ENCODE measurements at regions of chr3 and their contacts with region 1.

Region 1: DNA sequence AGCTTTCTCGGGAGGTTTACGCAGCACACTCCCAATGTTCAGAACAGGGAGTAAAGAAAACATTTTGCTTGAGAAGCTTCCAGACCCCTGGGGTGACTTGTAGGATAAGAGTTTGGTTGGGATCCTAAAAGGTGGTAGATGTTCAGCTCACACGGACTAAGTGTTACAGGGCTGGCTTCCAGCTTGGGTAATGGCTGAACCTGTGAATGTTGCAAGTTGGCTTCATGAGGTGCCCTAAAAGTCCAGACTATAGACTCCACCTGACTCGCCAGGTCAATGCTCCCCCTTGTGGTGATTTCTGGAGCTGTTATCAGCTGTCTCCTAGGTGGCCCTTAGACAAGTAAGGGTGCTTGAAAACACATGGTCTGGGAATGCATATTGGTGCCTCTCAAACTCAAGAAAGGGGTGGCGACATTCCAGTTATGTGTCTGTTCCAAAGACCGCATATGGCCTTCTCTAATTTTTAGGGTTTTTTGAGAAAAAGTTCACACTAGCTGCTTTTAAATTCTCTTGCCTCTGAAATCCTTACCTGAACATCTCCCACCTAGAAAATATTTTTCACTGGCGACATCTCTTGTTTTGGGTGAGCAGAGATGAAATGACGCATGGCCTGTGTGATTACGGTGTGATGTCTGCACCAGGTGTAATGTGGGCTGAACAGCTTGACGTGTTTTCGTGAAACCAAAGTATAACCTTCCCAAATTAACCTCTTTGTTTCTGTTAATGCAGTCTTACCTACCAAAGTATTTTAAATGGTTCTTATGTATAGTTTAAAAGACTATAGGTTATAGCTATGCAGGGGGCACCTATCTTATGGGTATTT is 175.7 kb upstream of the KBTBD8 start:
- DNase-seq: peak in 5 of 10 donors; percentile 35 to 60 (median 48)
- H3K4me3 ChIP-seq: no peak overlapping the region
- H3K27ac ChIP-seq: no peak overlapping the region
- H3K27me3 ChIP-seq: no peaks in the 10 kb centered on the region
- CTCF ChIP-seq: peak; percentile 33 to 77 (median 62)

Region 2: GRCh38 chr3:66483406-66483906 is 338.9 kb before region 1 on chr3:
- intact Hi-C with region 1: loop called in 1 of 2 experiments (anchors 5 kb)
- DNase-seq: peak in 9 of 10 donors; percentile 34 to 63 (median 46)
- H3K4me3 ChIP-seq: peak overlapping the region in 47 of 59 donors; percentile 0 to 58 (median 28)
- H3K27ac ChIP-seq: peak overlapping the region; percentile 63 to 98 (median 93)
- H3K27me3 ChIP-seq: no peaks in the 10 kb centered on the region
- CTCF ChIP-seq: peak in 6 of 56 donors; percentile 0 to 14 (median 6)

Region 3: GRCh38 chr3:66910266-66911055 is 88.1 kb after region 1 on chr3:
- intact Hi-C with region 1: no loop called
- DNase-seq: no peak
- H3K4me3 ChIP-seq: no peak overlapping the region
- H3K27ac ChIP-seq: no peak overlapping the region
- H3K27me3 ChIP-seq: peaks cover 0 to 11% (median 0%) of the 10 kb centered on the region in 45 donors
- CTCF ChIP-seq: no peak

Region 4: DNA sequence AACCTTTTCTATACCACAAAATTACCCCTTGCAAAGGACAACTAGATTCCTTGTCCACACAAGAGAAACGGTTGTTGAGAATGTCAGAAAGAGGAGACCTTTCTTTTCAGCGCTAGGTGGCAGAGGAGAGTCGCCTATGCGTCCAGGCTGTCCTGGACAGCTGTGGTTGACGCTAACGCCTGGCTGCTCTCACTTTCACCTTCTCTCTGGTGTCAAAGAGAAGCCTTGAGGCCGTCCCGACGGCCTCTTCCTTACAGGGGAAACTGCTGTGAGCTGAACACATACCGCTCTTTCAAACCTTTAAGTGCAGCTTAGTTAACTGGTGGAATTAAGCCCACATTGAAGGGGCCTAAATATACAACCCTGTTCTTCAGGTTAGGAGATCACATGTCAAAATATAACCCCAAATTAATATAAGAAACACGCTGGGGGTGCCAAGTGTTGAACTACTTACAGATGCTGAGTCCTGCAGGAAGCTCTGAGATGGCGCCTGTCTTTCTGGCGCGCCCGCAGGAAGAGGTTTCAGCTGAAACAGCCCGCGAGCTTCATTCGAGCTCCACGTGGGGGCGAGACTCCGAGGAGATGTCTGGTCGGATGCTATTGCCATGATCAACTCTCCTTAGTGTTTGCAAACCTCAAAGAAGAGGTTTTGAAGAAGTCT is 149.6 kb after region 1 on chr3:
- intact Hi-C with region 1: no loop called
- DNase-seq: peak; percentile 27 to 76 (median 64)
- H3K4me3 ChIP-seq: peak overlapping the region; percentile 7 to 66 (median 44)
- H3K27ac ChIP-seq: peak overlapping the region in 13 of 59 donors; percentile 3 to 63 (median 24)
- H3K27me3 ChIP-seq: no peaks in the 10 kb centered on the region
- CTCF ChIP-seq: peak; percentile 36 to 91 (median 79)

Measured in dorsolateral prefrontal cortex (tissue), 120 donors.